Right ventricle myocardium inferior (tissue), 1 donor: ENCODE measurements at regions of chr17 and their contacts with region 1.

Region 1: GRCh38 chr17:17568749-17569195 is 22.7 kb downstream of the PEMT start:
- DNase-seq: peak; percentile 88
- ATAC-seq: peak; percentile 35

Region 2: DNA sequence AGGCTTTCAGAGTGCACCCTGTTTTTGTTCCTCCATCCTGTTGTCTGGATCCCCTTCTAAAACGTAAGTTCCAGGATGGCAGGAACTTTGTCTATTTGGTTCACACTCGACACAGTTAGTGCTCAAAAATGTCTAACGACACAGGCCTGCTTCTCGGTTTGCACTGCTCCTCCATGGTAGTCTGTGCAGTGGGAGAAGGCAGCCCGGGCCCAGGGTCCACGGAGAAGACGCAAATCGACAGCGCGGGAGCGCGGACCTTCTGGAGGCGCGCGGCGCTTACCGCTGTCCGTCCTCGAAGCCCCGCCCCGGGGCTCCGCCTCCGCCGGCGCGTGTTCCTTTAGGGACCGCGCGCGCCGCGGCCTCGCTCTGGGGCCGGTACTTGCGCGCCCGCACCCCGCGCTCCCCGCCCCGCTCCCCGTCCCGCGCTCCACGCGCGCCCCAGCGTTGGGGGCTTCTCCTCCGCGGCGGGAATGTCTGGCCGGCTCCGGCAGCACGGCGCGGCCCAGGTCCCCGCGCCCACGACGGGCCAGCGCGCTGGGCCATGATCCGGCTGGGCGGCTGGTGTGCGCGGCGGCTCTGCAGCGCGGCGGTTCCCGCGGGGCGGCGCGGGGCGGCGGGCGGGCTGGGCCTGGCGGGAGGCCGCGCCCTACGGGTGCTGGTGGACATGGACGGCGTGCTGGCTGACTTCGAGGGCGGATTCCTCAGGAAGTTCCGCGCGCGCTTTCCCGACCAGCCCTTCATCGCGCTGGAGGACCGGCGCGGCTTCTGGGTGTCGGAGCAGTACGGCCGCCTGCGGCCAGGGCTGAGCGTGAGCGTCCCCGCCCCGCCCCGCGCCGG is 265.5 kb before region 1 on chr17 and contains the start of gene NT5M:
- intact Hi-C with region 1: no loop called
- DNase-seq: peak; percentile 94
- ATAC-seq: peak; percentile 90
- total RNA-seq, gene NT5M: 8.3 TPM

Region 3: DNA sequence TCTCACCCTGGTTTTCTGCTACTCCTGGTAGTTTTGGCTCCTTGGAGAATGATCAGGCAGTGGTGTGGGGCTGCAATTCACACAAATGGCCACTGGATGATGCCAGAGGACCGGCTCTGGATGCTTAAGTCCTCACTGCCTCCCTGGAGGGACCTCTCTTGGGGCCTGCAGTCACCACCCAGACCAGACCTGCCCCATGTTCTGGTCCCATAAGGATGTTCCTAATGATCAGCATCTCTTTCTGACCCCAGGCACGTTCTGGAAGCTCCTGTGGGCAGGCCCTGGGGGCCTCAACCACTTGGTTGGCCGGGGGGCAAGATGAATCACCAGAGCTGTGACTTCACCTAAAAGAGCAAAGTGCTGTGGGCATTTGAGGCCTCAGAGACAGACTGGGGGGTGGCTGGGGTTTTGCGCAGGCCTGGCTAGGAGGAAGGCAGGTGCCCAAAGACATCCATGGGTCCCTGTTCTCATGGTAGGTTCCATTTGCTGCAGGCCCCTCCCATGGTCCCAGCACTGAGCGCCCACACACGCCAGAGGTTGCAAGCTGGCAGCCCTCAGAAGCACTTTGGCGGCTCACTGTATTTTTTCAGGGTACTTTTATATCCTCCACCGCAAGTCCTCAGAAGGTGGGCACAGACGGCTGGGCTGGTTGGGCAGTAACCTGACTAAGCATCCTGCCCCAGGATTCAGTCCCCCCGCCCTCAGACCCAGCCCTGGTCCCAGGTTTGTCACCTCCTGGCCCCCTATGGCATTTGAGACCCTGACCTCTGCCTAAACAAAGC is 212.4 kb before region 1 on chr17:
- intact Hi-C with region 1: loop called (anchors 1 kb)
- DNase-seq: no peak
- ATAC-seq: peak; percentile 89

Region 4: GRCh38 chr17:17476865-17477467 is 91.8 kb before region 1 on chr17 and contains the start of gene MED9:
- intact Hi-C with region 1: loop called (anchors 5 kb)
- DNase-seq: peak; percentile 97
- ATAC-seq: peak; percentile 98
- total RNA-seq, gene MED9: 40.4 TPM

Region 5: DNA sequence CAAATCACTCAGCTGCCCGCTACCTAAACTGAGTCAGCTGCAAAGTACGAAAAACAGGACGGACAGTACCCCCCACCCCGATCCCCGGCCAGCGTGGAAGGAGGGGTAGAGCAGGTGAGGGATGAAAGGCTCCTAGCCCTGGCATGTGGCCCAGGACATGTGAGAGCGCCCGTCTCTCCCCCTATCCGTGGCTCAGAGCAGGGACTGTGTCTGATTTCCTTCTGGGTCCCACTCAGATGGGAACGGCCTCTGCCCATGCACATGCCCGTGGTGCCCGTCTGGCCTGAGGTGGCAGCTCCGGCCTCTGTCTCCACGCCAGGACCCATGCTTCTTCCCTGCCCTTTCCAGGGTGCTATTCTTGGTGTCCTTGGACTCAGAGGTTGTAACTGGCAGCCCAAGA is 42.4 kb before region 1 on chr17:
- intact Hi-C with region 1: loop called (anchors 1 kb)
- DNase-seq: peak; percentile 61
- ATAC-seq: peak; percentile 79

Region 6: GRCh38 chr17:17551361-17551760 is 17.4 kb before region 1 on chr17:
- intact Hi-C with region 1: loop called (anchors 1 kb)
- DNase-seq: peak; percentile 84
- ATAC-seq: peak; percentile 78

Region 7: GRCh38 chr17:17812211-17813057 is 243.7 kb after region 1 on chr17:
- intact Hi-C with region 1: no loop called
- DNase-seq: peak; percentile 88
- ATAC-seq: peak; percentile 51